K562 (cell line): ENCODE measurements at regions of chr12 and their contacts with region 1.

Region 1: DNA sequence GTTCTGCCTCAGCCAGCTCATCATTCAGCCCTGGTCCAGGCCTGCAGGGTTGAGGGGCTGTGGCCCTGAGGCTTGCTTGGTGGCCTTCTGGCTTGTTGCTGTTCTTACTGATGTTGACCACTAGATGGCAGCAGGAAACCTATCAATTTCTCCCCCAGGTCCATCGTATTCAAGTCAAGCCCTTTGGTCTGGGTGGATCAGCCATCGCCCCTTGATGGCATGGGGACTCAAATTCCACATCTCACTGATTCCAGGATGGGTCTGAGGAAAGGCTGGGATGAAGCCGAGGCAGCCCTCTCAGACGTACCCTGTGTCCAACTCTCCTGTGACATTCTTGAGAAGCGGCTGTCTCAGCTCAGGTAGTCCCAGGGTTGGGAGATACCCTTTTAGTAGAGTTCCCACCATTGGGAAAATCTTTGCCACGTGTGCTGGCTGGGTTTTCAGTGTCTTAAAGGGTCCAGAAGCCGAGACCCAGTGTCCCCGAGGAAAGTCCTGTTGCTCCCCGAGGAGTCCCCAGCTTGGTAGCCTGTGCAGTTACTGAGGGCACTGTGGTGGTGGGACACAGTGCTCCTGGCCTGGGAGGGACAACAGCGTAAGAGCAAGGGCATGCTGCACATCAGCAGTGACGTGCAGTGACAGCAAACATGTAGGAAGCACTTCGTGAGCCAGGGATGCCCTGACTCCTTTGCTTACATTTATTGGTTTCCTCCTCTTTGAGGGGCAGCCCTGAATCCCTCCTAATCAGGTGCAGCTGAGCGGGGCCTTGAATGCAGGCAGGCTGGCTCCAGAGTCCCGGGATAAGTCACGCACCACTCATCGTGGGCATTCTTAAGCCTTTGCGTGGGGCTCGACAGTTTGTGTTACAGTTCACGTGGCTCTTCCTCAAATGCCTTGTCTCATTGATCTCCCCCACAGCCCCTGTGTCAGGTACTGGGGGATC is 58.6 kb downstream of the TSPAN9 start:
- DNase-seq: peak; percentile 67 to 75 (median 72)
- ATAC-seq: peak; percentile 90
- H3K4me3 ChIP-seq: no peak overlapping the region
- H3K27ac ChIP-seq: no peak overlapping the region
- H3K4me1 ChIP-seq: no peaks in the 10 kb centered on the region
- H3K27me3 ChIP-seq: peaks cover 2 to 26% of the 10 kb centered on the region in 2 experiments; a peak in 3 of 5 replicates
- CTCF ChIP-seq: peak; percentile 71
- EP300 ChIP-seq: no peak
- POLR2A ChIP-seq: no peak
- RAD21 ChIP-seq: peak; percentile 46 to 72

Region 2: DNA sequence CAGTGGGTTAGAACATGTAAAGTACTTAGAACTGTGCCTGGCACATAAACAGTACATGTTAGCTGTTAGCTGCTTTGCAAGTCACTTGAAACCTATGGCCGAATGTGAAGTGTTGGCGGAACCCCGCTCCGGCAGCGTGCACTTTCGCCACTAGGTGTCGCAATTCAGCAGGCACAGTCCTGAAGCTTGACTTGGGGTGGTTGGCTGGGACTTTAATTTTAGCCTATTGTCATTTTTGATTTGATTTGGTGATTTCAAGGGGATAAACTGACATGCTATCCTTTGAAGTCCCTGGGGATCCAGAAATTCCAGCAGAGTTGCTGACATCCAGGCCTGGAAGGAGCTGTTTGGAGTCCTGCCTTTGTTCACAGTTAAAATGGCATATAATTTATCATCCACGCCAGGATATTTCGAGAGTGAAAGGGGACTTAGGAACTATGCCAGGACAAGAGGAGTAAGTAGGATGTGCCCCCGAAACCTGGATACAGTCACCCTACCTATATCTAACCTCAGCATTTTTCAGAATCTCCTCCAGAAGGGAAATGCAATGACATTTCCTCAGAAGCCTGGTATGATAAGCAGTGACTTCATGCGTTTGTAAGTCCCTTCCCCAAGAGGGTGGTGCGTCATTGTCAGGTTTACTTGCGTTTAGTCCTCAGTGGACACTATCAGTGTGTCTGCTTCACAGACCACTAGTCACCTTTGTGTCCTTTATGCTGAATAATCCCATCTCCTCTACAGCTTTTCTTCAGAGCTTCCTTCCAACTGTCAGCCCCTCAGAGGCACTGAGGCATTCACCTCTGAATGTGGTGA is 62.1 kb before region 1 on chr12:
- CTCF ChIA-PET with region 1: no interaction called
- POLR2A ChIA-PET with region 1: no interaction called
- in situ Hi-C with region 1: no loop called
- intact Hi-C with region 1: loop called (anchors 1 kb)
- DNase-seq: peak; percentile 74 to 81 (median 76)
- ATAC-seq: peak; percentile 88
- H3K4me3 ChIP-seq: no peak overlapping the region
- H3K27ac ChIP-seq: no peak overlapping the region
- H3K4me1 ChIP-seq: peaks cover 2 to 19% of the 10 kb centered on the region in 2 experiments; a peak in 3 of 5 replicates
- H3K27me3 ChIP-seq: peaks cover 9 to 10% of the 10 kb centered on the region in 2 experiments
- CTCF ChIP-seq: peak; percentile 85 to 92 (median 90)
- EP300 ChIP-seq: no peak
- POLR2A ChIP-seq: no peak
- RAD21 ChIP-seq: peak; percentile 45 to 73

Region 3: DNA sequence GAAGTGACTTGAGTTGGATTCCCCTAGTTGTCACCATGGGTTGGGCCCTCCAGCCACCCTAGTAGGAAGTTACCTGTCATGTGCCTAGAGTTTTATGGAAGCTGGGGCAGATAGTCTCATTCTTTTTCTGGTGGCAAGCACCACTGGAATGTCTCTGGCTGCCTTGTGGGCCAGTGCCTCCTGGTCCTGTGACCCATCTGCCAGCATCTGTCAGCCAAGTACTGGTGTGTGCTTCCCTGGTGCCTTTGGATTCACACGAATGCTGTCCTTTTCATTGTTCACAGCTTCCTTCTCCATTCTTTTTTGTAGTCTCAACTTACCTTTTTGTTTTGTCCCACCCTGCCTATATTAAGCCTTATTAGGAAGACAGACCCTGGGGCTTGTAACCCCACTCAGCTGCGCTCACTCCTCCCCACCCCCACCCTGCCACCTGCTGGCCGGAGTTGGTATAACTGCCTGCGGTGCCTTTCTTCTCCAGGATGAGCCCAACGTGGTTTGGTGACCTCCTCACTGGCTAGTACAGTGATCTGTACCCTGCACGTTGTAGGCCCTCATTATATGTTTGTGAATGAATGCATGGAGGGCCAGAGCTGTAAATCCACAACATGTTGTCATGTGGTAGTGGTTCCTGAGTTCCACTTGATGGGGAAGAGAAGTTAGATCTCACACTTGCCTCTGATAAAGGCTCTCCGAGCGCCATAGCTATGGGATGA is 67.1 kb after region 1 on chr12:
- CTCF ChIA-PET with region 1: interaction called, 4 read pairs
- POLR2A ChIA-PET with region 1: no interaction called
- in situ Hi-C with region 1: no loop called
- intact Hi-C with region 1: loop called (anchors 5 kb)
- DNase-seq: peak; percentile 49 to 78 (median 75)
- ATAC-seq: peak; percentile 83
- H3K4me3 ChIP-seq: no peak overlapping the region
- H3K27ac ChIP-seq: no peak overlapping the region
- H3K4me1 ChIP-seq: peaks cover 0 to 5% of the 10 kb centered on the region in 2 experiments; a peak in 1 of 5 replicates
- H3K27me3 ChIP-seq: peaks cover 0 to 12% of the 10 kb centered on the region in 2 experiments; a peak in 1 of 5 replicates
- CTCF ChIP-seq: peak; percentile 63 to 84 (median 69)
- EP300 ChIP-seq: no peak
- POLR2A ChIP-seq: no peak
- RAD21 ChIP-seq: peak; percentile 22 to 45; a peak in 3 of 4 replicates

Region 4: GRCh38 chr12:3417937-3418462 is 282.2 kb after region 1 on chr12:
- CTCF ChIA-PET with region 1: no interaction called
- POLR2A ChIA-PET with region 1: no interaction called
- in situ Hi-C with region 1: no loop called
- intact Hi-C with region 1: no loop called
- DNase-seq: no peak
- ATAC-seq: no peak
- H3K4me3 ChIP-seq: no peak overlapping the region
- H3K27ac ChIP-seq: no peak overlapping the region
- H3K4me1 ChIP-seq: no peaks in the 10 kb centered on the region
- H3K27me3 ChIP-seq: no peaks in the 10 kb centered on the region
- CTCF ChIP-seq: no peak
- EP300 ChIP-seq: no peak
- POLR2A ChIP-seq: no peak
- RAD21 ChIP-seq: no peak